ENCODE measurements at regions of chr3 and their contacts with region 1.

Region 1: DNA sequence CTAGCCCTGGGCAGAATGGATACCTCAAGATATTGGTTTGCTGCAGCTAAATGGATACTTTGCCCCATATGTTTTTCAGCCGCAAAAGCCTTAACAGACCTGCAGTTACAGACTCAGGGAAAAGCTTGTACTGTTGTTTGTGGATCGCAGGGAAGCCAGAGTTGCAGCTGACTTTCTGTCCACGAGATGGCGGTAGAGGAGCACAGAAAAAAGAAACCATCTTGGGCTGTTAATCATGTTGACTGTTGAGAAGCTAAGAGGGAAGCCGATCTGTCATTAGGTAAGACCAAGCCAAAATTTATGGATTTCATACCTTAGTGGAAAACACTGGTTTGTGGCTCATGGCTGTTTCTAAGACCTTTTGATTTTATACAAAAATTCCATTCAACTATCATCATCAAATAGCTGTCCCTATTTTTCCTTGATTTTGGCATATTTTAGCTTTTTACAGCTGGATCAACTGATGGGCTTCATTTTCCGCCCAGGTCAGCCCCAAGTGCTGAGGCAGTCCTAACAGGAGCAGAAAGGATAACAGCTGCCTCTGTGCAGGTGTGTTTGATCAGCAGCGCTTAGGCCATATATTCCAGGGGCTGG is 205.7 kb upstream of the ZPLD1 start:
- DNase-seq: peak; percentile 63 to 77
- H3K4me3 ChIP-seq: no peak overlapping the region
- H3K4me3 Mint-ChIP-seq: no peak overlapping the region
- H3K27ac Mint-ChIP-seq: no peak overlapping the region
- H3K4me1 ChIP-seq: no peaks in the 10 kb centered on the region
- H3K4me1 Mint-ChIP-seq: no peaks in the 10 kb centered on the region
- H3K27me3 ChIP-seq: no peaks in the 10 kb centered on the region
- H3K27me3 Mint-ChIP-seq: peaks cover 4% of the 10 kb centered on the region
- CTCF ChIP-seq: peak; percentile 83 to 88

Region 2: DNA sequence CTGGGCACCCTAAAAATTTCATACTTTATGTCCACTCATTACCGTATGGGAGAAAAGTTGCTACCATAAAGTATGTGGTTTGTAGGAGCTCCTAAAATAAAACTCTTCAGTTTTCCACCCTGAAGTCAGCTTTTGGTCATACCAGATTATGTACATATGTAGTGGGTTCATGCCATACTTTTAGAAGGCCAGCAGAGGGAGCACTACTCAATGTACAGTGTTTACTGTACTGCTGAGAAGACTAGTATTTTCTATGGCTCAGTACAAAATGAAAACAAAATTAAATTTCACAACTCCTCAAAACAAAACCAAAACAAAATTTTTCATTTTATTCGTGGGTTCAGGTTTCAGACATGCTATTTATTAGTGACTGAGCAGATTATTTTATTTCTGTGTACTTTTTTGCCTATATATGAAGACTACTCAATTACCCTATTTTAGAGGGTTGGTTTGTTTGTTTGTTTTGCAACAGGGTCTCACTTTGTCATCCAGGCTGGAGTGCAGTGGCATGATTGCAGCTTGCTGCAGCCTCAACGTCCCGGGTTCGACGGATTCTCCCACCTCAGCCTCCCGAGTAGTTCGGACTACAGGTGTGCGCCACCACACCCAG is 425.9 kb before region 1 on chr3:
- CTCF ChIA-PET with region 1: interaction called, 46 read pairs
- POLR2A ChIA-PET with region 1: no interaction called
- intact Hi-C with region 1: no loop called
- DNase-seq: peak; percentile 44 to 52
- H3K4me3 ChIP-seq: no peak overlapping the region
- H3K4me3 Mint-ChIP-seq: no peak overlapping the region
- H3K27ac Mint-ChIP-seq: no peak overlapping the region
- H3K4me1 ChIP-seq: no peaks in the 10 kb centered on the region
- H3K4me1 Mint-ChIP-seq: no peaks in the 10 kb centered on the region
- H3K27me3 ChIP-seq: no peaks in the 10 kb centered on the region
- H3K27me3 Mint-ChIP-seq: no peaks in the 10 kb centered on the region
- CTCF ChIP-seq: peak; percentile 66 to 87

Region 3: GRCh38 chr3:101976473-101976872 is 252.7 kb before region 1 on chr3:
- CTCF ChIA-PET with region 1: interaction called, 4 read pairs
- POLR2A ChIA-PET with region 1: no interaction called
- intact Hi-C with region 1: loop called (anchors 5 kb)
- DNase-seq: no peak
- H3K4me3 ChIP-seq: no peak overlapping the region
- H3K4me3 Mint-ChIP-seq: no peak overlapping the region
- H3K27ac Mint-ChIP-seq: no peak overlapping the region
- H3K4me1 ChIP-seq: no peaks in the 10 kb centered on the region
- H3K4me1 Mint-ChIP-seq: no peaks in the 10 kb centered on the region
- H3K27me3 ChIP-seq: no peaks in the 10 kb centered on the region
- H3K27me3 Mint-ChIP-seq: peaks cover 9% of the 10 kb centered on the region
- CTCF ChIP-seq: no peak

Region 4: DNA sequence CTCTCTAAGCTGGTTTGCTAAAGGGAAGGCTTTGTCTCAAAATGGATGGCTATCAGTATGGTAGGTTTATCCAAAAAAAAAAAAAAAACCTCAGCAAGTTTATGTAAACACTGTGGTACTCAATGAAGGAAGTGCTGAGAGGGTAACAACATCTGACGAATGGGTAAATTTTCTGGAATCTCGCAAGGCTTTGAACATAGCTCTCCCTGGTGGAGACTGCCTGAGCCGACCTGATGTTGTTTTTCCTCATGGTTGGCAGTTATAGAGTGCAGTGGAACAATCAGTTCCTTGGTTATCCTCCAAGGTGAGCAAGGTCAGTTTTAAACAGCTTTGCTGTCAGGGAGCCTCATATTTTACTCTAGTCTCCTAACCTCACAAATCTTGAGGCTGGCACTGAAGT is 300.3 kb after region 1 on chr3:
- CTCF ChIA-PET with region 1: interaction called, 6 read pairs
- POLR2A ChIA-PET with region 1: no interaction called
- intact Hi-C with region 1: loop called (anchors 1 kb)
- DNase-seq: peak in 1 of 2 experiments; percentile 8
- H3K4me3 ChIP-seq: no peak overlapping the region
- H3K4me3 Mint-ChIP-seq: no peak overlapping the region
- H3K27ac Mint-ChIP-seq: no peak overlapping the region
- H3K4me1 ChIP-seq: no peaks in the 10 kb centered on the region
- H3K4me1 Mint-ChIP-seq: no peaks in the 10 kb centered on the region
- H3K27me3 ChIP-seq: no peaks in the 10 kb centered on the region
- H3K27me3 Mint-ChIP-seq: no peaks in the 10 kb centered on the region
- CTCF ChIP-seq: peak in 1 of 2 experiments; percentile 50

Region 5: GRCh38 chr3:102673271-102674115 is 444.3 kb after region 1 on chr3:
- CTCF ChIA-PET with region 1: interaction called, 4 read pairs
- POLR2A ChIA-PET with region 1: no interaction called
- intact Hi-C with region 1: loop called (anchors 2 kb)
- DNase-seq: peak; percentile 52 to 78
- H3K4me3 ChIP-seq: peak overlapping the region; percentile 11; the same call in 1 of the 2 replicates
- H3K4me3 Mint-ChIP-seq: peak overlapping the region; percentile 42
- H3K27ac Mint-ChIP-seq: no peak overlapping the region
- H3K4me1 ChIP-seq: peaks cover 11% of the 10 kb centered on the region; the same call in 1 of the 2 replicates
- H3K4me1 Mint-ChIP-seq: no peaks in the 10 kb centered on the region
- H3K27me3 ChIP-seq: no peaks in the 10 kb centered on the region
- H3K27me3 Mint-ChIP-seq: no peaks in the 10 kb centered on the region
- CTCF ChIP-seq: peak; percentile 81

Measured in Caco-2 (cell line).